K562 (cell line): ENCODE measurements at regions of chr1 and their contacts with region 1.

Region 1: GRCh38 chr1:55179177-55179835 is 35.9 kb downstream of the USP24 start:
- DNase-seq: peak; percentile 52 to 82 (median 64)
- ATAC-seq: peak; percentile 92
- H3K4me3 ChIP-seq: no peak overlapping the region
- H3K27ac ChIP-seq: peak overlapping the region; percentile 40
- H3K4me1 ChIP-seq: peaks cover 11 to 24% of the 10 kb centered on the region in 2 experiments
- H3K27me3 ChIP-seq: no peaks in the 10 kb centered on the region
- CTCF ChIP-seq: no peak
- EP300 ChIP-seq: peak; percentile 72
- POLR2A ChIP-seq: no peak
- RAD21 ChIP-seq: no peak

Region 2: DNA sequence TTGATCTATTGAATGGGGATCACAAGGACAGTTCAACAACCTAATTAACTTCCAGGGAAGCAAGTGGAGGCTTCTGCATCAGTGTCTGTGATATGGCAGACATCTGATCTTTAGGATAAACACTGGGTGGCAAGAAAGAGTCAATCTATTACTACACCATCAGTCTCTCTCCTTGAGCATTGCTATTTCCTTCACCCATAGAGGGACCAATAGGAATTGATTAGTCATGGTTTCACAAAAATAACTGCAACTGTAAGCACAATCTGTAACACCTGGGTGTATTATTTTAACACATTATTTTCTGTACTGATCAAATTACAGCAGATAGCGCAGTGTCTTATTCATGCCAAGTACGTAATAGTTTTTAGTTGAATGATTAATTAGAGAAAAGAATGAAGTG is 14.4 kb before region 1 on chr1:
- CTCF ChIA-PET with region 1: no interaction called
- POLR2A ChIA-PET with region 1: interaction called, 11 read pairs
- in situ Hi-C with region 1: no loop called
- intact Hi-C with region 1: no loop called
- DNase-seq: no peak
- ATAC-seq: no peak
- H3K4me3 ChIP-seq: no peak overlapping the region
- H3K27ac ChIP-seq: no peak overlapping the region
- H3K4me1 ChIP-seq: no peaks in the 10 kb centered on the region
- H3K27me3 ChIP-seq: no peaks in the 10 kb centered on the region
- CTCF ChIP-seq: no peak
- EP300 ChIP-seq: no peak
- POLR2A ChIP-seq: no peak
- RAD21 ChIP-seq: peak in 1 of 2 experiments; percentile 27; a peak in 1 of 4 replicates

Region 3: DNA sequence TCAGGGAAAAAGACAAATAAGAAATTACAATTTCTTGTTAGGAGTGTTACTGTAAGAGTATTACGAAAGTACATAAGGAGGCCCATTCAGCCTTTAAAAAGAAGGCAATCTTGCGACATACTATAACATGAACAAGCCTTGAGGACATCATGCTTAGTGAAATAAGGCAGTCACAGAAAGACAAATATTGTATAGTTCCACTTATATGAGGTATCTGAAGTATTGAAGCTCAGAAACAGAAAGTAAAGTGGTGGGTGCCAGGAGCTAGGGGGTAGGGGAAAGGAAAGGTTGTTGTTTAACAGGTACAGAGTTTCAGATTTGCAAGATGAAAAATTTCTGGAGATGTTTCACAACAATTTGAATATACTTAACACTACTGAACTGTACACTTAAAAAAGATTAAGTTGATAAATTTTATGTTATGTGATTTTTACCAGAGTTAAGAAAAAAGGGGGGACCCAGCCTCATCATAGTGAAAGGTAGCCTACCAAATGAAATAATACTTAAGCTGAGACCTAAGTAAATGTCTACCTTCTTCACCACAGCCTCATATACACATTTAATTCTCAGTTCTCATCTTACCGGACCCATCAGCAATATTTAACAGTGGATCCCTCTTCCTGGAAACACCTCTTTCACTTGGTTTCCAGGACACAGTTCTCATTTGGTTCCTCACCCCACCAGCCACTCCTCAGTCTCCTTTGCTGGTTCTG is 16.4 kb after region 1 on chr1:
- CTCF ChIA-PET with region 1: no interaction called
- POLR2A ChIA-PET with region 1: interaction called, 16 read pairs
- in situ Hi-C with region 1: no loop called
- intact Hi-C with region 1: no loop called
- DNase-seq: no peak
- ATAC-seq: peak; percentile 24; the same call in 2 of the 3 replicates
- H3K4me3 ChIP-seq: no peak overlapping the region
- H3K27ac ChIP-seq: peak overlapping the region; percentile 75
- H3K4me1 ChIP-seq: peaks cover 19 to 73% of the 10 kb centered on the region in 2 experiments
- H3K27me3 ChIP-seq: no peaks in the 10 kb centered on the region
- CTCF ChIP-seq: no peak
- EP300 ChIP-seq: no peak
- POLR2A ChIP-seq: no peak
- RAD21 ChIP-seq: no peak

Region 4: GRCh38 chr1:55233145-55233777 is 54.0 kb after region 1 on chr1:
- CTCF ChIA-PET with region 1: no interaction called
- POLR2A ChIA-PET with region 1: no interaction called
- in situ Hi-C with region 1: no loop called
- intact Hi-C with region 1: no loop called
- DNase-seq: no peak
- ATAC-seq: no peak
- H3K4me3 ChIP-seq: no peak overlapping the region
- H3K27ac ChIP-seq: no peak overlapping the region
- H3K4me1 ChIP-seq: no peaks in the 10 kb centered on the region; a peak in 1 of 5 replicates
- H3K27me3 ChIP-seq: no peaks in the 10 kb centered on the region
- CTCF ChIP-seq: no peak
- EP300 ChIP-seq: no peak
- POLR2A ChIP-seq: no peak
- RAD21 ChIP-seq: no peak